CD8-positive, alpha-beta T cell (primary cell): ENCODE measurements at regions of chr22 and their contacts with region 1.

Region 1: DNA sequence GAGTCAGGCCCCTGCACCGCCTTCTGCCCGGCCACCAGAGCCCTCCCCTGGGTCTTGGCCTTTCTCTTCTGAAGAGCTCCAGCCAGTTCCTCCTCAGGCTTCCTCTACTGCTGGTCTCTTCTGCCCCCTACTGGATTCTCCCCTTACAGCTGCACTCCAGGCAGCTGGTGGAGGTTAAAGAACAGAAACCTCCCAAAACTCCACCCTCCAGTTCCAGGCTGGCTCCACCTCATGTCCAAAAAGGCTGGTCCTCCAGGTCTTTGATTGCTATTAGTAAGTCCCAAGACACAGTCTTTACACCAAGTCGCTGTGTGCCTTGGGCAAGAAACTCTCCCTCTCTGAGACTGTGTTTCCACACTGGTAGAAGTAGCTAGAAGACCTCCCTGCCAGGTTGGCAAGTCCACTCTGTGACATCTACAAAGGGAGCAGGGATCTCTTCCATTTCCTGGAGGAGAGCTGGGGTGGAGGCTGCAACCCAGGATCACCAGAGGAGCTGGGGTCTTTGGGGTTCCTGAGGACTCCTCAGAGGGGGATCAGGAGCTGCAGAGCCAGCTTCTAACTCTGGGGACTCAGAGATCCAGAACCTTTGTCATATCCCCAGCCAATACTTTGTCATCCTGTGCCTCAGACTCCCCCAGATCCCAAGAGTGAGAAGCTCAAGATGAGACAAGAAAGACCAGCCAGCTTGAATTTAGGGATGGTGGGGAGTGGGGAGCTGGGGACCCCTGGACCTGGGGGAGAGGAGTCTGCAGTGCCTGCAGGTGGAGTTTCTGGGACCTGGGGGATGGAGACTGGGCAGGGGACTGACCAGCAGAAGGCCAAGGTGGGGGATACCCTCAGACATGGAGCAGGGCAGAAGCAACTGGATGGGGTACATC is 3.4 kb upstream of the IGLL5 start:
- DNase-seq: peak; percentile 46 to 86 (median 67)
- ATAC-seq: peak; percentile 78
- H3K4me3 ChIP-seq: no peak overlapping the region
- H3K4me3 Mint-ChIP-seq: no peak overlapping the region
- H3K27ac ChIP-seq: no peak overlapping the region
- H3K27ac Mint-ChIP-seq: no peak overlapping the region
- H3K4me1 ChIP-seq: no peaks in the 10 kb centered on the region
- H3K4me1 Mint-ChIP-seq: no peaks in the 10 kb centered on the region
- H3K27me3 ChIP-seq: no peaks in the 10 kb centered on the region
- H3K27me3 Mint-ChIP-seq: no peaks in the 10 kb centered on the region
- CTCF ChIP-seq: peak; percentile 93

Region 2: DNA sequence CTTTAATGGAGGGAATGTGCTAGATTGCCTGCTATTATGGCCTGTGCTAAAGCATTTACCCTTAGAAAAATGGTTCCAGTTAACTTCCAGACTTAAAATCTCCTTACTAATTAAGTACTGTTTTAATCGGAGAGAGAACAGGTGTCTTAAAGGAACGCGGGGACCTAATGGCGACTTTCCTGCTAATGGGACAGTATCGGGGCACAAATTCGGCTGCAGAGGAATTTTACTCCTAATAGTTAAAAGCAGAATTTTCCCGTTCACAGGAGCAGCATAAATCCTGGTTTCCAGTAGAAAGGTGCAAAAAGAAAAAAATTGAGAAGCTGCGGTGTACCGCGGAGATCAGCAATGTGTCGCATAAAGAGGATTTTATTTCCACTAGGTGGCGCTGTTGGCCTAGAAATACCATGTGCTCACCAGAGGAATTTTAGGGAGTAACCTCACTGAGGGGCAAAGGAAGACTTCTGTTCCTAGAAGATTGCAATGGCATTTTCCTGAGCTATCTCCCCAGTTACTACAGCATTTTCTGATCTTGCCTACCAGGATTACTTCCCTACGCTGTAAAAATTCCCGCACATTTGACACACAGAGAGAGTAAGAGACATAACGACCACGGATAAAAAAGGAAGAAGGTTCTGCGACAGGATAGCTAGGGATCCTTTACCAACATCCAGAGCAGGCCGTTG is 420.3 kb before region 1 on chr22:
- CTCF ChIA-PET with region 1: no interaction called
- POLR2A ChIA-PET with region 1: no interaction called
- intact Hi-C with region 1: no loop called
- DNase-seq: peak in 8 of 9 experiments; percentile 21 to 73 (median 48)
- ATAC-seq: no peak
- H3K4me3 ChIP-seq: no peak overlapping the region
- H3K4me3 Mint-ChIP-seq: no peak overlapping the region
- H3K27ac ChIP-seq: no peak overlapping the region
- H3K27ac Mint-ChIP-seq: no peak overlapping the region
- H3K4me1 ChIP-seq: no peaks in the 10 kb centered on the region
- H3K4me1 Mint-ChIP-seq: no peaks in the 10 kb centered on the region
- H3K27me3 ChIP-seq: peaks cover 0 to 4% of the 10 kb centered on the region in 2 experiments
- H3K27me3 Mint-ChIP-seq: peaks cover 34% of the 10 kb centered on the region
- CTCF ChIP-seq: peak; percentile 78

Region 3: GRCh38 chr22:22666307-22667091 is 217.8 kb before region 1 on chr22:
- CTCF ChIA-PET with region 1: interaction called, 10 read pairs
- POLR2A ChIA-PET with region 1: no interaction called
- intact Hi-C with region 1: no loop called
- DNase-seq: peak in 2 of 9 experiments; percentile 25 to 34
- ATAC-seq: no peak
- H3K4me3 ChIP-seq: no peak overlapping the region
- H3K4me3 Mint-ChIP-seq: no peak overlapping the region
- H3K27ac ChIP-seq: no peak overlapping the region
- H3K27ac Mint-ChIP-seq: no peak overlapping the region
- H3K4me1 ChIP-seq: no peaks in the 10 kb centered on the region
- H3K4me1 Mint-ChIP-seq: no peaks in the 10 kb centered on the region
- H3K27me3 ChIP-seq: no peaks in the 10 kb centered on the region
- H3K27me3 Mint-ChIP-seq: no peaks in the 10 kb centered on the region
- CTCF ChIP-seq: no peak

Region 4: DNA sequence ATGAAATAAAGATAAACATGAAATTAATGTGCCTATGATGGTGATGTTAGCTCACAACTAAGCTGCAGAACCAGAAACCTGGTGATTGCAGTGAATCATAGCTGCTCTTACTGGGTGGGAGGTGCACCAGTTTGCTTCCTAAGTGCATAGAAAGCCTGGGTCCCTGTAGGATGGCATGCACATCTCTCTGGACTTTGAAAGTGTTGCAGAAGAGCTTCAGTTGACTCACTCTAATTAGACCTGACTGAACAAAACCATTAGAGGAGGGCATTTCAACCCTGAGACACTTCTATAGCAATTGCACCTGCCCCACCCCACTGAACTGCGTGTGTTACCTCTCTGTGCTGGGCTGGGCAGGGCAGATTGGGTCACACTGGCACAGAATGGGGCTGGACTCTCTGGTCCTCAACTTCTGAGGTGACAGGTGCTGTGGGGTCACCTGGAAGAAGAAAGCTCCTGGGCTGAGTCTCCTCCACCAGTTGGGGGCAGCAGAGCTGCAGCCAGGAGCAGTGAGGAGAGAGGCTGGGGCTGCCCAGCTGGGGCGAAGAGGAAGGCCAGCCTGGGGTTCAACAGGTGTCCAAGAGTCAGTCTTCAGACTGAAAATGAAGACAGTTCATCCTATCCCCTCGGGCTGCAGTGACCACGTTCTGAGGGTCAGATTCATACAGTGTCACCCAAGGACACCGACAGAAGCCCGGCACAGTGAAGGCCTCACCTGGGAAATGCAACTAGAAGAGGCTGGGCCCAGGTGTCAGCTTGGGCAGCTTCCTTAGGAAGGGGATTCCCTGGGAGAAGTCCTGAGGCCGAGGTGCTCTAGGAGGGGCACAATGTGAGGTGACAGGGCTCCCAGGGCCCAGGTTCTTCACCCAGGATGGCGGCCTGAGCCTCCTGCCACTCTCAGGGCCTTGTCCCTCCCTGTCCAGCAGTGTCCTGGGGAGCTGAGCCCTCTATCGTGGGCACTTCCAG is 181.7 kb before region 1 on chr22:
- CTCF ChIA-PET with region 1: interaction called, 137 read pairs
- POLR2A ChIA-PET with region 1: no interaction called
- intact Hi-C with region 1: no loop called
- DNase-seq: peak in 3 of 9 experiments; percentile 15 to 43 (median 25)
- ATAC-seq: no peak
- H3K4me3 ChIP-seq: no peak overlapping the region
- H3K4me3 Mint-ChIP-seq: no peak overlapping the region
- H3K27ac ChIP-seq: no peak overlapping the region
- H3K27ac Mint-ChIP-seq: no peak overlapping the region
- H3K4me1 ChIP-seq: no peaks in the 10 kb centered on the region
- H3K4me1 Mint-ChIP-seq: no peaks in the 10 kb centered on the region
- H3K27me3 ChIP-seq: no peaks in the 10 kb centered on the region
- H3K27me3 Mint-ChIP-seq: no peaks in the 10 kb centered on the region
- CTCF ChIP-seq: no peak

Region 5: DNA sequence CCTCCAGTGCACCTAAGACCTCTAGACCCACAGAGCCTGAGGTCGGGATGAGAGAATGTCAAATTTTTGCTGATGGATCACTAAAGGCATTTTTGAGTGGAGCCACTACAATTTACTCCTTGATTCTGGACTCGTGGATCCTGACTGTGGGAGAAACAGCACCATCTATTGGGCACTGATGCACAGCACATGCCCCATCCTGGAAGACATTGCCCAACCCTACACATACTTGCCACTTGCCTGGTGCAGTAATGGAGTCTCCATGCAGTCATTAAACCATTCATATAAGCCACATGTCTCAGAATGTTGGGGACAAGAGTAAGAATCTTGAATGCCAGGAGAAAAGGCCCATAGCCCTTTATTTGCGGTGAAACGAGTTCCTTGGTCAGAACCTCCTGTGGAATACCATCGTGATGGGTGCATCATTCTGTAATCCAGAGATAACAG is 135.9 kb before region 1 on chr22:
- CTCF ChIA-PET with region 1: interaction called, 279 read pairs
- POLR2A ChIA-PET with region 1: interaction called, 9 read pairs
- intact Hi-C with region 1: loop called in 1 of 2 experiments (anchors 1 kb)
- DNase-seq: peak in 5 of 9 experiments; percentile 22 to 77 (median 45)
- ATAC-seq: peak; percentile 52
- H3K4me3 ChIP-seq: no peak overlapping the region
- H3K4me3 Mint-ChIP-seq: no peak overlapping the region
- H3K27ac ChIP-seq: no peak overlapping the region
- H3K27ac Mint-ChIP-seq: peak overlapping the region; percentile 32
- H3K4me1 ChIP-seq: peaks cover 12% of the 10 kb centered on the region
- H3K4me1 Mint-ChIP-seq: peaks cover 35% of the 10 kb centered on the region
- H3K27me3 ChIP-seq: no peaks in the 10 kb centered on the region
- H3K27me3 Mint-ChIP-seq: peaks cover 8% of the 10 kb centered on the region
- CTCF ChIP-seq: peak; percentile 69

Region 6: GRCh38 chr22:22787786-22788459 is 96.3 kb before region 1 on chr22:
- CTCF ChIA-PET with region 1: interaction called, 173 read pairs
- POLR2A ChIA-PET with region 1: interaction called, 7 read pairs
- intact Hi-C with region 1: loop called in 1 of 2 experiments (anchors 5 kb)
- DNase-seq: peak; percentile 35 to 86 (median 75)
- ATAC-seq: peak; percentile 80
- H3K4me3 ChIP-seq: no peak overlapping the region
- H3K4me3 Mint-ChIP-seq: no peak overlapping the region
- H3K27ac ChIP-seq: peak overlapping the region in 1 of 2 experiments; percentile 69
- H3K27ac Mint-ChIP-seq: peak overlapping the region; percentile 85
- H3K4me1 ChIP-seq: peaks cover 38% of the 10 kb centered on the region
- H3K4me1 Mint-ChIP-seq: peaks cover 54% of the 10 kb centered on the region
- H3K27me3 ChIP-seq: no peaks in the 10 kb centered on the region
- H3K27me3 Mint-ChIP-seq: no peaks in the 10 kb centered on the region
- CTCF ChIP-seq: peak; percentile 78

Region 7: DNA sequence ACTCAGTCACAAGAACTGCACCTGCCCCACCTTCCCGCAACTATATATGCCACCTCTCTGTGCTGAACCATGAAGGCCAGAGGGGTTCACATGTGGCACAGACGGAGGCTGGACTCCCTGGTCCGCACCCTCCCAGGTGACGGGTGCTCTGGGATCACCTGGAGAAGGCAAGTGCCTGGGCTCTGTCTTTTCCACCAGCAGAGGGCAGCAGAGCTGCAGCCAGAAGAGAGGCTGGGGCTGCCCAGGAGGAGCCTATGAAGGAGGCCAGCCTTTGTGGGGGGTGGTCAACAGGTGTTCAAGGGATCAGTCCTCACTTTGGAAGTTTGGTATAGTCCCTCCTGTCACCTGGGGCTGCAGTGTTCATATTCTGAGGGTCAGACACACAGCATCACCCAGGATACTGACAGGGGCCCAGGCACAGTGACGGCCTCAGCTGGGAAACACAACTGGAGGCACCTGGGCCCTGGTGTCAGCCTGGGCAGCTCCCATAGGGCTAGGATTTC is 35.8 kb before region 1 on chr22:
- CTCF ChIA-PET with region 1: interaction called, 29 read pairs
- POLR2A ChIA-PET with region 1: interaction called, 3 read pairs
- intact Hi-C with region 1: no loop called
- DNase-seq: peak; percentile 39 to 85 (median 72)
- ATAC-seq: peak; percentile 83
- H3K4me3 ChIP-seq: no peak overlapping the region
- H3K4me3 Mint-ChIP-seq: no peak overlapping the region
- H3K27ac ChIP-seq: no peak overlapping the region
- H3K27ac Mint-ChIP-seq: no peak overlapping the region
- H3K4me1 ChIP-seq: peaks cover 16% of the 10 kb centered on the region
- H3K4me1 Mint-ChIP-seq: peaks cover 46% of the 10 kb centered on the region
- H3K27me3 ChIP-seq: no peaks in the 10 kb centered on the region
- H3K27me3 Mint-ChIP-seq: no peaks in the 10 kb centered on the region
- CTCF ChIP-seq: peak; percentile 80

Region 8: GRCh38 chr22:23152315-23153113 is 268.3 kb after region 1 on chr22:
- CTCF ChIA-PET with region 1: no interaction called
- POLR2A ChIA-PET with region 1: no interaction called
- intact Hi-C with region 1: no loop called
- DNase-seq: no peak
- ATAC-seq: peak; percentile 31
- H3K4me3 ChIP-seq: peak overlapping the region in 1 of 2 experiments; percentile 19
- H3K4me3 Mint-ChIP-seq: peak overlapping the region; percentile 37
- H3K27ac ChIP-seq: peak overlapping the region in 1 of 2 experiments; percentile 15
- H3K27ac Mint-ChIP-seq: peak overlapping the region; percentile 66
- H3K4me1 ChIP-seq: peaks cover 13% of the 10 kb centered on the region
- H3K4me1 Mint-ChIP-seq: peaks cover 15% of the 10 kb centered on the region
- H3K27me3 ChIP-seq: no peaks in the 10 kb centered on the region
- H3K27me3 Mint-ChIP-seq: no peaks in the 10 kb centered on the region
- CTCF ChIP-seq: no peak

Region 9: DNA sequence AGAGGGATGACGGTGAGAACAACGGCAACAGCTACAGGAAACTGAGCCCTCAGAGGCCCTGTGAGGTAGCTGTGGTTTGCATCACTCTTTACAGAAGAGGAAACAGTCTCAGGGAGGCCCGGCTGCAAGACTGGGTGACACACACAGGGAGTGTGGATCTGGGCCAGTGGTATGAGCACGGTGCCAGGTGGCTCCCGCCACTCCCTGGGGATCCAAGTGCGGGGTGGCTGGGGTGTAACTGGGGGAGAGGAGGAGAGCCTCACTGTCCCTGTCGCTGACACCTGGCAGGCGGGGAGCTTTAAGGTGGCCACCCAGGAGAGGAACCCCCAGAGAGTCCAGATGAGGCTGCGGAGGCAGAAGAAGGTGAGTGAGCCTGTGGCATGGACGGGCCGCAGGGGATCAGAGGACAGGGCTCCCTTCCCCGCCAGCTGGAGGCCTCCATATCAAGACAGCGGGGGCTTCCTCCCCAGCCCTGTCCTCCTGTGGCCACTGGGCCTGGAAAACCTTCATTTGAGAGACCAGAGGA is 812.1 kb after region 1 on chr22:
- CTCF ChIA-PET with region 1: no interaction called
- POLR2A ChIA-PET with region 1: no interaction called
- intact Hi-C with region 1: no loop called
- DNase-seq: peak; percentile 60 to 93 (median 80)
- ATAC-seq: peak; percentile 97
- H3K4me3 ChIP-seq: peak overlapping the region; percentile 53 to 67
- H3K4me3 Mint-ChIP-seq: peak overlapping the region; percentile 98
- H3K27ac ChIP-seq: peak overlapping the region; percentile 92 to 96
- H3K27ac Mint-ChIP-seq: peak overlapping the region; percentile 100
- H3K4me1 ChIP-seq: peaks cover 42% of the 10 kb centered on the region
- H3K4me1 Mint-ChIP-seq: peaks cover 52% of the 10 kb centered on the region
- H3K27me3 ChIP-seq: no peaks in the 10 kb centered on the region
- H3K27me3 Mint-ChIP-seq: no peaks in the 10 kb centered on the region
- CTCF ChIP-seq: no peak